CD4-positive, alpha-beta memory T cell (primary cell): ENCODE measurements at regions of chr4 and their contacts with region 1.

Region 1: DNA sequence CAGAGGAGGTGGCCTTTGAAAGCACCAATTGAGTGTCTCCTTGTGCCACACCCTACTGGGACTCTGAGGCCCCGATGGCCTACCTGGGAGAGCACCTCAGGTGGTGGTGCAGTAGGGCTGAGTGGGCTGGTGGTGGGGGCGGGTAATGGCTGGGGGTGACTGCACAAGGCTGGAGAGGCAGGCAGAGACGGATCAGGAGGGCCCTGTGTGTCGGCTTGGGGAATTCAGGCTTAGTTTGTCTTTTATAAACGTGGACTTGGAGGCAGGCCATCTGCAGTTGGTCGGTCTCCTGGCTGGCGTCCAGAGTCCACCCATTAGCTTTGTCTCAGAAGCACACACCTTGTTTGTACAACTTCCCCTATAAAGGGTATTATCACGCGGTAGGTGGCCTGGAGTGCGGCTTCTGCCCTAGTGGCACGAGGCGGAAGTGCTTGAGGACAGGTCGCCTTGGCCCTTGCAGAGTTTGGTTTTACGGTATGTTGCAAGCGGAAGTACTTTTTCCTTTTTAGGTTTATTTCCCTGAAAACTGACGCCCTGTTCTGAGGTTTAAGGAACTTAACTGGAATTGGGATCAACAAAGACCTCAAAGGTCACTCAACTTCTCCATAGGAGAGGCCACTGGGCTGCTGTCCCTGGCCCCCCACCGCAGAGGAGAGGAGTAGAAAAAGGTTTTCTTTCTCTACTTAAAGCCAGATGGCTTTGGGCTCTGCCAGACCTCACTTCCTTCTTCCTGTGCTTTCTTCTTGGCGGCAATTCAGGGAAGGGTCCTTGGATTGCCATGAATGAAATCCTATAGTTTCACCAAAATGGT is 8.0 kb downstream of the TBC1D14 start:
- DNase-seq: peak in 1 of 5 donors; percentile 34
- H3K4me3 ChIP-seq: peak overlapping the region in 1 of 2 donors; percentile 47
- H3K4me3 Mint-ChIP-seq: peak overlapping the region; percentile 32 to 85 (median 66)
- H3K27ac ChIP-seq: peak overlapping the region; percentile 67
- H3K27ac Mint-ChIP-seq: peak overlapping the region; percentile 94 to 98 (median 96)
- H3K4me1 ChIP-seq: peaks cover 81% of the 10 kb centered on the region
- H3K4me1 Mint-ChIP-seq: peaks cover 54 to 89% (median 73%) of the 10 kb centered on the region in 4 donors
- H3K27me3 ChIP-seq: no peaks in the 10 kb centered on the region
- H3K27me3 Mint-ChIP-seq: no peaks in the 10 kb centered on the region

Region 2: GRCh38 chr4:6898763-6899162 is 18.9 kb before region 1 on chr4:
- CTCF ChIA-PET with region 1: interaction called, 9 read pairs
- POLR2A ChIA-PET with region 1: interaction called, 10 read pairs
- intact Hi-C with region 1: no loop called
- DNase-seq: no peak
- H3K4me3 ChIP-seq: no peak overlapping the region
- H3K4me3 Mint-ChIP-seq: peak overlapping the region in 7 of 8 donors; percentile 18 to 78 (median 67)
- H3K27ac ChIP-seq: no peak overlapping the region
- H3K27ac Mint-ChIP-seq: peak overlapping the region; percentile 82 to 93 (median 88)
- H3K4me1 ChIP-seq: peaks cover 30% of the 10 kb centered on the region
- H3K4me1 Mint-ChIP-seq: peaks cover 13 to 37% (median 24%) of the 10 kb centered on the region in 4 donors
- H3K27me3 ChIP-seq: no peaks in the 10 kb centered on the region
- H3K27me3 Mint-ChIP-seq: no peaks in the 10 kb centered on the region

Region 3: DNA sequence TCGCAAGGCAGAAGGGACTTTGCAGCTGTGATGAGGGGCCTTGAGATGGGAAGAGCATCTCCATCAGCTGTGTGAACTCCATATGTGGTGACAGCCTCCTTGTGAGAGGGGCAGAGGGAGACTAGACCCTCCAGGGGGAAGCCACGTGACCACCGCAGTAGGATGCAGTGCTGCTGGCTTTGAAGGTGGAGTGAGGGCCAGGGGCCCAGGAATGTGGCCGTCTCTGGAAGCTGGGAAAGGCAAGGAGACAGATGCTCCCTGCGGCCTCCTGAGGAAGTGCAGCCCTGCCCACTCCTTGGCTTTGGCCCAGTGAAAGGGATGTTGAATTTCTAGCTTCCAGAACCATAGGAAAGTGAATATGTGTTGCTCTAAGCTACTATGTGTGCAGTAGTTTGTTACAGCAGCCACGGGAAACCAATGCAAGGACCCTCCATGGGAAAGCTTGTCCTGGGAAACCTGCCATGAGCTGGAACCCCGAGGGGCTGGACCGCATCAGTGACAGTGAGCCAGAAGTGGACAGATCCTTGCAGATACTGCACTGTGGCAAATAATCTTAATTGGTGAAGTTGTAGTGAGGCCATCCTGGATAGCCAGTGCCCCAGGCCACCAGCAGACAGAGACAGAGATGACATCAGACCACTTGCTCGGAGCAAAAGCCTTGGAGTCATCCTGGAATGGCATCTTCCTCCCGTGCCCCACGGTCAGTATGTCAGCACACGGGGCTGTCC is 239.3 kb after region 1 on chr4:
- CTCF ChIA-PET with region 1: no interaction called
- POLR2A ChIA-PET with region 1: no interaction called
- intact Hi-C with region 1: no loop called
- DNase-seq: no peak
- H3K4me3 ChIP-seq: no peak overlapping the region
- H3K4me3 Mint-ChIP-seq: no peak overlapping the region
- H3K27ac ChIP-seq: no peak overlapping the region
- H3K27ac Mint-ChIP-seq: no peak overlapping the region
- H3K4me1 ChIP-seq: no peaks in the 10 kb centered on the region
- H3K4me1 Mint-ChIP-seq: no peaks in the 10 kb centered on the region
- H3K27me3 ChIP-seq: no peaks in the 10 kb centered on the region
- H3K27me3 Mint-ChIP-seq: peaks cover 14 to 31% of the 10 kb centered on the region in 2 donors